GM13977 (cell line): ENCODE measurements at regions of chr1 and their contacts with region 1.

Region 1: DNA sequence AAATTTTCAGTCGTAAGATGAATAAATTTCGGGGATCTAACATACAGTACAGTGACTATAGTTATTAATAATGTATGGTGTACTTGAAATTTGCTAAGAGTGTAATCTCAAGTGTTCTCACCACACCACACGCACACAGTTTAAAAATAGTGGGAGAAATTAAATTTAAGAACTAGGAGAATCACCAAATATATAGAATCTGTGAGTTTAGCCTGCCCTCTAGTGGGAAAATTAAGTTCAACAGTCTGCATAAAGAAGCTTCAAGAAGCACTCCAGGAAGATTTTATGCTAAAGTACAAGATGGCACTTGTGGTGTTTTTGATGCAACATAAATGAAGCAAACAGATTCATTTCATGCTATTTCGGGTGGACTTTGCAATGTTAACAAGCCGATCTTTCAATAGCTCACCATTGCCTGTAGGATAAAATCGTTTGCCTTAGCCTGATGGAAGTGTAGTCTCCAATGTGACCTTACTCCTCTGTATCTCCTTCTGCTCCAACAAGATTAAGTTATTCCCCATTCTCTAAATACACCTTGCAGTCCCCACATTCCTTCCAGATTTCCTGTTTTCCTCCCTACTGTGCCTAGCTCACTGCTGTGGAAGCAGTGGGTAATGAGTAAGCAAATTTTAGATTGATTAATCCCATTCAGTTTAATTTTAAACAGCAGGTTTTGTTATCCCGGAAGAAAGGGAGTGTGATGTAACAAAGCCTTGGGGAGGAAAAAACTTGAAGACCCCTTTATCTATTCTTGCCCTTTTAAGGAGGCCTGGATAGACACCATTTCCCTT is 8.7 kb upstream of the PIK3C2B start:
- DNase-seq: no peak
- CTCF ChIP-seq: peak; percentile 64

Region 2: DNA sequence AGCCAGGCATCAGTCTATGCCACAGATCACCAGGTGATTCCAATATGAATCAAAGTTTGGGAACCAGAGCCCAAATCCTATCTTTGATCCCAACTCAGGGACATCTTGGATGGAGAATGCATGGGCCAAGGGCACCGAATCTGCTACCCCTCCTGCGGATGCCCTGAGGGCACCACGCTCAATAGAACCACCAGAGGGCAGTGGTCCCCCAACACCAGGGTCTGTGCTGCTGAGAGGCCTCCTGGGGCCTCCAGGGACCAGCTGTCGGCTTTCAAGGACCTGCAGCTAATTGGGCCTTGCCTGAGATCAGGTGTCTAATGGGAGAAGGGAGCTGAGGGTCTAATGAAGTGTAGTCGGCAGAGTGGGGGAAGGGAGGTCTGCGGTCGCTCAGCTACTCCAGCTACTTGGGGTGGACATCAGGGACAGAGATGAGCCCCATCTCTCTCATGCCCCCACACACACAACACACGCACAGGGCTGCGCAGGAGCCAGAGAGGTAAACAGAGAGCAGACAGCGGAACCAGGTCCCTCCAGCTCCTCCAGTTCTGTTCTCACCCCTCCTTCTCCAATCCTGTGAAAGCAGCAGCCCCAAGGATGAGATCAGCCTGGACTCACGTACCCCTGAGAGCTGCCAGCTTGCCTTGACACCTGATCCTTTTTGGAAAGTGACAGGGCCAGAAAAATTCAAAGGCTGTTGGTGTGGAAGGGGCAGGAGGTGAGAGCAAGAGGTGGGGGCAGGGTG is 56.8 kb before region 1 on chr1:
- in situ Hi-C with region 1: loop called (anchors 5 kb)
- DNase-seq: peak; percentile 85
- CTCF ChIP-seq: peak; percentile 95